ENCODE measurements at regions of chr5 and their contacts with region 1.

Region 1: GRCh38 chr5:128213340-128213739 is 129.8 kb downstream of the SLC12A2 start:
- DNase-seq: peak in 1 of 3 donors; percentile 71
- ATAC-seq: peak; percentile 42
- H3K4me3 ChIP-seq: no peak overlapping the region
- H3K4me1 ChIP-seq: no peaks in the 10 kb centered on the region
- CTCF ChIP-seq: no peak

Region 2: GRCh38 chr5:127925916-127926315 is 287.4 kb before region 1 on chr5:
- intact Hi-C with region 1: no loop called
- DNase-seq: peak in 1 of 3 donors; percentile 40
- ATAC-seq: peak; percentile 77
- H3K4me3 ChIP-seq: no peak overlapping the region
- H3K4me1 ChIP-seq: peaks cover 5% of the 10 kb centered on the region
- CTCF ChIP-seq: no peak

Region 3: GRCh38 chr5:128498844-128499455 is 285.6 kb after region 1 on chr5:
- intact Hi-C with region 1: loop called (anchors 5 to 10 kb)
- DNase-seq: peak in 1 of 3 donors; percentile 56
- ATAC-seq: no peak
- H3K4me3 ChIP-seq: no peak overlapping the region
- H3K4me1 ChIP-seq: no peaks in the 10 kb centered on the region
- CTCF ChIP-seq: peak; percentile 22

Region 4: DNA sequence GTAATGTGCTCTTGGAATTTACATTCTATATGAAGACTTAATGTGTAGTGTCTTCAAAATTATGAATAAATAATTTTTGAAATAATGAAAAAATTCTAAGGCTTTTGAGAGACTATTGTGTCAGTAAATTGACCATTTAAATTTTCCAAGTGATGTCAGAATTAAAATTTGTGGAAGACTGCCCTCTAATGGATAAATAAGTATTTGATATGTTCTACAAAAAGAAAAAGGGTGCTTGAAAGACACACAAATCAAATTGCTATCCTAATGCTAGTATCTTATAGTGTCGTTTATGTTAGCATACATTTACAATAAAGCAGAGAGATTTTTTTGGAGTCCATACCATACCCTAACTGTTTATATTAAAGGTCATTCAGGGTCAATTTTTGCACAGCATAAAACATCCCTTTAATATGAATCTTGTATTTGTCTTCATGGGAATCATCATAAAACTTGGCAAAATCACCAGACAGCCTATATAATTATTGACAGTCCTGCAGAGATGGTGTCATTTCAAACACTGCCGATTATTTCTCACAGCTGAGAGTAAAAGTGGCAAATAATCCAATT is 631.1 kb after region 1 on chr5:
- intact Hi-C with region 1: loop called in 1 of 2 experiments (anchors 10 kb)
- DNase-seq: no peak
- ATAC-seq: no peak
- H3K4me3 ChIP-seq: no peak overlapping the region
- H3K4me1 ChIP-seq: no peaks in the 10 kb centered on the region
- CTCF ChIP-seq: no peak

Measured in mucosa of descending colon (tissue), 3 donors.